ENCODE measurements at regions of chr2 and their contacts with region 1.

Region 1: GRCh38 chr2:189142893-189143759 is 36.4 kb downstream of the COL5A2 start:
- DNase-seq: peak; percentile 4 to 70 (median 35)
- ATAC-seq: peak; percentile 85
- H3K4me3 ChIP-seq: no peak overlapping the region
- H3K4me3 Mint-ChIP-seq: no peak overlapping the region
- H3K27ac ChIP-seq: no peak overlapping the region
- H3K27ac Mint-ChIP-seq: no peak overlapping the region
- H3K4me1 ChIP-seq: no peaks in the 10 kb centered on the region
- H3K4me1 Mint-ChIP-seq: peaks cover 3% of the 10 kb centered on the region
- H3K27me3 ChIP-seq: no peaks in the 10 kb centered on the region
- H3K27me3 Mint-ChIP-seq: no peaks in the 10 kb centered on the region
- CTCF ChIP-seq: peak; percentile 83

Region 2: GRCh38 chr2:189086710-189087109 is 56.4 kb before region 1 on chr2:
- CTCF ChIA-PET with region 1: no interaction called
- POLR2A ChIA-PET with region 1: no interaction called
- intact Hi-C with region 1: no loop called
- DNase-seq: no peak
- ATAC-seq: no peak
- H3K4me3 ChIP-seq: no peak overlapping the region
- H3K4me3 Mint-ChIP-seq: no peak overlapping the region
- H3K27ac ChIP-seq: no peak overlapping the region
- H3K27ac Mint-ChIP-seq: no peak overlapping the region
- H3K4me1 ChIP-seq: no peaks in the 10 kb centered on the region
- H3K4me1 Mint-ChIP-seq: no peaks in the 10 kb centered on the region
- H3K27me3 ChIP-seq: no peaks in the 10 kb centered on the region
- H3K27me3 Mint-ChIP-seq: no peaks in the 10 kb centered on the region
- CTCF ChIP-seq: no peak

Region 3: DNA sequence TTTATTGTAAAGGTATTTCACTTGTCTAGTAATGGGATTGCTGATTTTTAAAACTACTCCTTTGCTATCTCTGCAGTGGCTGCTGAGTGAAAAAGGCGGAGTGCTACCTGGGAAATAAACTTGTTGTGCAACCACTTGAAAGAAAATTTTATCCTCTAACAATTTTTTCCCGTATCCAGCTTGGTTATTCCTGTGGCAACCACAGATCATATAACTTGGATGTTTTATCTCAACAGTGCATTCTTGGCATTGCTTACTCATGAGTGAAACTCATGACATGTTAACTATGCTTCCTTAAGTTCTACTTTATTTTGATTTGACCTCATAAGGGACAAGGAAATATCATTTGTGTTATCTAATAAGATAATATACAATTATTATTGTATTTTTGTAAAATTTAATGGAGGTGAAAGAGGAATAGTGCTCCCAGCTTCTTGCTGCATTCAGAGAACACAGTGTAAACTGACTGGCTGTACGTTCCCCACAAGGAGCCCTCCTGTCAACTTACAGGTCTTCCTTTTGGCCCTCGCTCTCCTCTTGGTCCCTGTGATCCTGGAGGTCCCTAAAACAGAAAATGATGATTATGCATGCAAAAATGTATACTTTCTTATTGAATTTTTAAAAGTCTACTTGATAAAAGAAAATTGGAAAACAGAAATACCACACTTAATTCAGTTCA is 46.2 kb before region 1 on chr2:
- CTCF ChIA-PET with region 1: interaction called, 5 read pairs
- POLR2A ChIA-PET with region 1: no interaction called
- intact Hi-C with region 1: loop called in 1 of 2 experiments (anchors 1 kb)
- DNase-seq: no peak
- ATAC-seq: no peak
- H3K4me3 ChIP-seq: no peak overlapping the region
- H3K4me3 Mint-ChIP-seq: no peak overlapping the region
- H3K27ac ChIP-seq: no peak overlapping the region
- H3K27ac Mint-ChIP-seq: no peak overlapping the region
- H3K4me1 ChIP-seq: no peaks in the 10 kb centered on the region
- H3K4me1 Mint-ChIP-seq: no peaks in the 10 kb centered on the region
- H3K27me3 ChIP-seq: peaks cover 0 to 3% of the 10 kb centered on the region in 2 experiments
- H3K27me3 Mint-ChIP-seq: no peaks in the 10 kb centered on the region
- CTCF ChIP-seq: no peak

Region 4: DNA sequence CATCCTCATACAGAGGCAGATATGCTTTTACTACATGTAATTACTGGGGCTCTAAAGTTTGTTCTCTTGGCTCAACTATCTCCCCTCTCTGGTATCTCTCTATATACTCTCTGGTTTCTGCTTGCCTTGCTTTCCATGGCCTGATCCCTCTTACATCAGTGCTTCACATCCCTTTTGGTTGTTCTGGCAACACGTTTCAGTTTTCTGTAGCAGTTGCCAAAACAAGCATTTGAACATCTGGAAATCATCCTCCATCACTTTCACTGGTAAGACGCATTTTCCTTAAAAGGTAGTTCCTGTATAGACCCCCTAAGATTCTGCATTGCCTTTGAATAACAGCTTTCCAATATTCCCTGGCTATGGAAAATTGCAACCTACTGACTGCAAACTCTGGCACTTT is 10.5 kb after region 1 on chr2:
- CTCF ChIA-PET with region 1: interaction called, 15 read pairs
- POLR2A ChIA-PET with region 1: no interaction called
- intact Hi-C with region 1: no loop called
- DNase-seq: no peak
- ATAC-seq: no peak
- H3K4me3 ChIP-seq: no peak overlapping the region
- H3K4me3 Mint-ChIP-seq: no peak overlapping the region
- H3K27ac ChIP-seq: no peak overlapping the region
- H3K27ac Mint-ChIP-seq: no peak overlapping the region
- H3K4me1 ChIP-seq: no peaks in the 10 kb centered on the region
- H3K4me1 Mint-ChIP-seq: no peaks in the 10 kb centered on the region
- H3K27me3 ChIP-seq: no peaks in the 10 kb centered on the region
- H3K27me3 Mint-ChIP-seq: no peaks in the 10 kb centered on the region
- CTCF ChIP-seq: no peak

Region 5: DNA sequence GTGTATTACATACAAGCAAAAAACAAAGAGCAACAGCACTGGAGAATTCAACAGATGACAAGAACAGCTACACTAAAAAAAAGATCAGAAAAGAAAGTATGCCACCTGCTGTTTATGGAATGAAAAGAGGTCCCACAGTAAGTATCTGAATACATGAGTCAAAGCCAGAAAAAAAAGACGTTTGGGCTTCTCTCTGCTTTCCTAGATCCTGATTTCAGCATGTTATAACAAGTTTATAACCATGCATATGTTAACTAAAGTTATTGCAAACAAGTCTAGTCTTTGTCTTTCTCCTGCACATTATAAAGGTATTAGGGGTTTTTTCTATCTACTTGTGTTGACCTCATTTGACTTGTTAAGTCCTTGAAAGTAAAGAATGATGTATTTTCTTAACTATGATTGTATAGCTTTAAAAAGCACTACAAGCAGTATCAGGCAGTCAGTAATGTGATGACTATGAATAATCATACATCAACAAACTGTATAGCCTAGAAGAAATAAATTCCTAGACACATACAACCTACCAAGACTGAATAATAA is 144.9 kb after region 1 on chr2:
- CTCF ChIA-PET with region 1: interaction called, 12 read pairs
- POLR2A ChIA-PET with region 1: no interaction called
- intact Hi-C with region 1: loop called in 1 of 2 experiments (anchors 1 kb)
- DNase-seq: peak in 2 of 9 experiments; percentile 33 to 40
- ATAC-seq: no peak
- H3K4me3 ChIP-seq: no peak overlapping the region
- H3K4me3 Mint-ChIP-seq: no peak overlapping the region
- H3K27ac ChIP-seq: no peak overlapping the region
- H3K27ac Mint-ChIP-seq: no peak overlapping the region
- H3K4me1 ChIP-seq: peaks cover 4% of the 10 kb centered on the region
- H3K4me1 Mint-ChIP-seq: peaks cover 11% of the 10 kb centered on the region
- H3K27me3 ChIP-seq: no peaks in the 10 kb centered on the region
- H3K27me3 Mint-ChIP-seq: no peaks in the 10 kb centered on the region
- CTCF ChIP-seq: peak; percentile 41

Region 6: GRCh38 chr2:189347540-189347939 is 204.4 kb after region 1 on chr2:
- CTCF ChIA-PET with region 1: interaction called, 29 read pairs
- POLR2A ChIA-PET with region 1: no interaction called
- intact Hi-C with region 1: loop called (anchors 1 to 2 kb)
- DNase-seq: peak in 3 of 9 experiments; percentile 9 to 61 (median 52)
- ATAC-seq: peak; percentile 38
- H3K4me3 ChIP-seq: no peak overlapping the region
- H3K4me3 Mint-ChIP-seq: no peak overlapping the region
- H3K27ac ChIP-seq: no peak overlapping the region
- H3K27ac Mint-ChIP-seq: no peak overlapping the region
- H3K4me1 ChIP-seq: peaks cover 3% of the 10 kb centered on the region
- H3K4me1 Mint-ChIP-seq: peaks cover 16% of the 10 kb centered on the region
- H3K27me3 ChIP-seq: no peaks in the 10 kb centered on the region
- H3K27me3 Mint-ChIP-seq: no peaks in the 10 kb centered on the region
- CTCF ChIP-seq: peak; percentile 33

Region 7: DNA sequence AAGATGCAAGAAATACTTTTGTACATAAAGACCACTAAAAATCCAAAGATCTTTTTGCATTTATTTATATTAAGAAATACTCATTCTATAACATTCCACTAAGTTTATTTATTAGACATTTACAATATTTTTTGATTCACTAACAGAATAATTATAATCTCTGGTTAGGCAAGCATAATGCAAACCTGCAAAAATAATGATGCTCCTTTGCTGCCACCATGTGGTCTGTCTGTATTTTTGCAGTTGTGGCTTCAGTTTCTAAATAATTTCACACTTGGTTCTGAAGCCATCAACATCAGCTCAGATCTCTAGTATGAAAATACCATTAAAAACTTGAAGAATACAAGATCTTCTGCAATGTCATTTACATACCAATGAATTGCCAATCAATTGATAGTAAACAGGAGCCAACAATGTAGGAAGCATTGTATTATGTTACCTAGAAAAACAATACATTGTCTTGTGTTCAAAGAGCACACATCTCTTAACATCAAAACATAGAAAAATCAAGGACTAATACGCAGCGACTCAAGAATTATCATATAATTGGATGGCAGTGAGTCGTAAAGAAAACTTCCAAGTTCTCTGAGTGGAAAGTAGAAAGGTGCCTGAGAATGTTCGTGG is 269.3 kb after region 1 on chr2:
- CTCF ChIA-PET with region 1: interaction called, 24 read pairs
- POLR2A ChIA-PET with region 1: no interaction called
- intact Hi-C with region 1: loop called (anchors 1 kb)
- DNase-seq: peak in 7 of 9 experiments; percentile 29 to 68 (median 52)
- ATAC-seq: no peak
- H3K4me3 ChIP-seq: no peak overlapping the region
- H3K4me3 Mint-ChIP-seq: no peak overlapping the region
- H3K27ac ChIP-seq: no peak overlapping the region
- H3K27ac Mint-ChIP-seq: no peak overlapping the region
- H3K4me1 ChIP-seq: peaks cover 4% of the 10 kb centered on the region
- H3K4me1 Mint-ChIP-seq: peaks cover 7% of the 10 kb centered on the region
- H3K27me3 ChIP-seq: no peaks in the 10 kb centered on the region
- H3K27me3 Mint-ChIP-seq: no peaks in the 10 kb centered on the region
- CTCF ChIP-seq: peak; percentile 86

Region 8: DNA sequence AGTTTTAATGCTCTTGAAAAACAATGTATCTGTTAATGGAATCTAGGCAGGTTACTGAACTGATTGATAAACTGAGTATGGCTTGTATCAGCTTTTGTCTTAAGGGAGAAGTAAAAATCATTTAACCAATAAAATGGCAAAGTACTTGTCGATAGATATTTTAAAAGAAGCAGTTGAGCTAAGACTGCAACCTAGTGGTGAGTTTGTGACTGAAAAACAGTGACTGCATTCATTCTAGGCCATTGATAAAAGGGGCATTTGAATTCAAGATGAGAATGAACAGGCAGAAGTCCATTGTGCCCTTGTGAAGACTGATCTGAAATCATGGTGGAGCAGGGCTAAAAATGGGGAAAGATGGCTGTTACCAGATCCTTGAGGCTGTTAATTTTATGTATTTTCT is 978.8 kb after region 1 on chr2:
- CTCF ChIA-PET with region 1: no interaction called
- POLR2A ChIA-PET with region 1: no interaction called
- intact Hi-C with region 1: loop called in 1 of 2 experiments (anchors 5 kb)
- DNase-seq: peak in 2 of 9 experiments; percentile 4 to 11
- ATAC-seq: no peak
- H3K4me3 ChIP-seq: no peak overlapping the region
- H3K4me3 Mint-ChIP-seq: no peak overlapping the region
- H3K27ac ChIP-seq: no peak overlapping the region
- H3K27ac Mint-ChIP-seq: no peak overlapping the region
- H3K4me1 ChIP-seq: no peaks in the 10 kb centered on the region
- H3K4me1 Mint-ChIP-seq: peaks cover 11% of the 10 kb centered on the region
- H3K27me3 ChIP-seq: no peaks in the 10 kb centered on the region
- H3K27me3 Mint-ChIP-seq: no peaks in the 10 kb centered on the region
- CTCF ChIP-seq: no peak